Heart left ventricle (tissue), 16 donors: ENCODE measurements at regions of chr11 and their contacts with region 1.

Region 1: GRCh38 chr11:35006389-35007128 is 90.1 kb downstream of the PDHX start:
- DNase-seq: no peak
- ATAC-seq: no peak
- H3K4me3 ChIP-seq: no peak overlapping the region
- H3K27ac ChIP-seq: peak overlapping the region in 1 of 12 donors; percentile 29
- H3K4me1 ChIP-seq: peaks cover 0 to 20% (median 0%) of the 10 kb centered on the region in 12 donors
- H3K27me3 ChIP-seq: no peaks in the 10 kb centered on the region
- CTCF ChIP-seq: no peak
- POLR2A ChIP-seq: no peak

Region 2: DNA sequence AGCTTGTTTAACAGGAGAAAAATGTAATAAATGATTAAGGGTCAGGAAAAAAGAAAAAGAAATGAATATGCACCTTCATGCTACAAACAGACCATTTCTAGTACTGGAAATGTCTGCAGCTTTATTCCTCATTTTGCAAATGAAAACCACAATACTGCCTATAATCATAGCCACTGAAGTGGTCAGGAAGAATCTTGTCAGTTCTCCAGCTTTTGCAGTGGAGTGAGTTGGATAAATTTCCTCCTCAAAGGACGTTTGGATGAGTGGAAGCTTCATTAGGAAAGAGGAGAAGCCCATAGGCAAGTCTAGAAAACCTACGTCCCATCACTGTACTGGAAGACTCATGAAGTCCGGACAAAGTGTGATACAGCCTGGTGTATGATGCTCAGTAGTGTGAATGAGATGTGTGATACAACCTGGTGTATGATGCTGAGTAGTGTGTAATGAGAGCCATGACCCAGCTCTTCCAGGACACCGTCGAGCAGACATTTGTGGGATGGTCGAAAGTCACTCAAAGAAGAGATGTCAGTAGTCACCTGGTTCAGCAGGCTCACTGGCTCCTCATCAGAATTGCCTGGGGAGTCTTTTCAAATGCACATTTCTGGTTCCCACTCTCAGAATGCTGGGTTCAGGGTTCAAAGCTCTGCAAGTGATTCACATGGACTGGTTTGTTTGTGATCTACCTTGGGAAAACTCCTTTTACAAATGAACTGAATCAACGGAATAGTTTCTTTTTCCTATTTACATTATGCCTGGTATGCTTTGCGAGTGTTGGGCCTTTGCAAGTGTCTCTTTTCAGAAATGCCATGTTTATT is 11.2 kb after region 1 on chr11:
- intact Hi-C with region 1: loop called in 1 of 10 experiments (anchors 1 kb)
- DNase-seq: no peak
- ATAC-seq: no peak
- H3K4me3 ChIP-seq: no peak overlapping the region
- H3K27ac ChIP-seq: no peak overlapping the region
- H3K4me1 ChIP-seq: peaks cover 0 to 8% (median 0%) of the 10 kb centered on the region in 12 donors
- H3K27me3 ChIP-seq: no peaks in the 10 kb centered on the region
- CTCF ChIP-seq: no peak
- POLR2A ChIP-seq: no peak